Activated T-helper 2 cell treated with anti-CD3 and anti-CD28 coated beads, Interferon-gamma antibody, Interleukin-2, Interleukin-4, amounts not matched to agents 10 μg/mL and 5 μg/mL and 100 μg/mL, durations not matched to agents 14 hours and 24 hours and 36 hours (primary cell): ENCODE measurements at regions of chr11 and their contacts with region 1.

Region 1: GRCh38 chr11:46389450-46390253 is 1.9 kb downstream of the CHRM4 start:
- DNase-seq: peak; percentile 50
- H3K4me3 Mint-ChIP-seq: peak overlapping the region; percentile 13
- H3K27ac Mint-ChIP-seq: no peak overlapping the region
- H3K4me1 Mint-ChIP-seq: peaks cover 18% of the 10 kb centered on the region
- H3K27me3 Mint-ChIP-seq: peaks cover 63% of the 10 kb centered on the region

Region 2: GRCh38 chr11:46529095-46529905 is 139.6 kb after region 1 on chr11:
- intact Hi-C with region 1: loop called (anchors 2 kb)
- DNase-seq: peak; percentile 57
- H3K4me3 Mint-ChIP-seq: no peak overlapping the region
- H3K27ac Mint-ChIP-seq: no peak overlapping the region
- H3K4me1 Mint-ChIP-seq: peaks cover 17% of the 10 kb centered on the region
- H3K27me3 Mint-ChIP-seq: no peaks in the 10 kb centered on the region